SK-N-SH (cell line): ENCODE measurements at regions of chr5 and their contacts with region 1.

Region 1: DNA sequence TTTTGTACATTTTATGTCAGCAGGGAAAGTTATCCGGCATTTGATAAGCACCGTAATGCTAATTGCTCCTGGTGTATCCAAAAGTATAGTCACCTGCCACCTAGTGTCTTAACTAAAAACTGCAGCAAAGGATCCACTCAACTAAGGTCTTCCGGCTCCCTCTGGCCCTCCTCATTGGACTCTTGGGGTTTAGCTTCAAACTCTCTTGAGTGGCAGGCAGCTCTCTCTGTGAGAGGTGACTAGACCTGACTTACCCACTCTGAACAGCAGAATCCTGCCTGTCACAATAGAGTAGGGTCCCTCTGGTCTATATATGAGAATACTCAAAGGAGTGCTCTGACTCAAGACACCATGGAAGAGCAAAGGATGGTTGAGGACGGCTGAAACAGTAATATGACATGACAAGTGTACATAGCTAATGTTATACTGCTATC is 60.3 kb upstream of the CAST start:
- DNase-seq: peak; percentile 67
- H3K4me3 ChIP-seq: no peak overlapping the region
- H3K27ac ChIP-seq: no peak overlapping the region
- H3K4me1 ChIP-seq: peaks cover 0 to 4% of the 10 kb centered on the region in 2 experiments; a peak in 1 of 4 replicates
- H3K27me3 ChIP-seq: no peaks in the 10 kb centered on the region
- CTCF ChIP-seq: peak; percentile 81
- EP300 ChIP-seq: no peak
- RAD21 ChIP-seq: peak; percentile 79

Region 2: GRCh38 chr5:96336351-96336985 is 265.4 kb before region 1 on chr5:
- CTCF ChIA-PET with region 1: interaction called, 40 read pairs
- POLR2A ChIA-PET with region 1: no interaction called
- DNase-seq: peak; percentile 36
- H3K4me3 ChIP-seq: no peak overlapping the region
- H3K27ac ChIP-seq: peak overlapping the region; percentile 19 to 49; a peak in 3 of 4 replicates
- H3K4me1 ChIP-seq: peaks cover 0 to 18% of the 10 kb centered on the region in 2 experiments; a peak in 2 of 4 replicates
- H3K27me3 ChIP-seq: no peaks in the 10 kb centered on the region
- CTCF ChIP-seq: peak; percentile 94
- EP300 ChIP-seq: no peak
- RAD21 ChIP-seq: peak; percentile 95

Region 3: GRCh38 chr5:96350678-96351077 is 251.2 kb before region 1 on chr5:
- CTCF ChIA-PET with region 1: interaction called, 112 read pairs
- POLR2A ChIA-PET with region 1: no interaction called
- DNase-seq: no peak
- H3K4me3 ChIP-seq: no peak overlapping the region
- H3K27ac ChIP-seq: no peak overlapping the region
- H3K4me1 ChIP-seq: peaks cover 0 to 7% of the 10 kb centered on the region in 2 experiments; a peak in 1 of 4 replicates
- H3K27me3 ChIP-seq: no peaks in the 10 kb centered on the region
- CTCF ChIP-seq: no peak
- EP300 ChIP-seq: no peak
- RAD21 ChIP-seq: no peak

Region 4: GRCh38 chr5:96614110-96614691 is 12.4 kb after region 1 on chr5:
- CTCF ChIA-PET with region 1: interaction called, 26 read pairs
- POLR2A ChIA-PET with region 1: no interaction called
- DNase-seq: peak; percentile 64
- H3K4me3 ChIP-seq: peak overlapping the region; percentile 10 to 58; a peak in 2 of 4 replicates
- H3K27ac ChIP-seq: peak overlapping the region; percentile 17 to 89; a peak in 3 of 4 replicates
- H3K4me1 ChIP-seq: peaks cover 0 to 16% of the 10 kb centered on the region in 2 experiments; a peak in 1 of 4 replicates
- H3K27me3 ChIP-seq: no peaks in the 10 kb centered on the region
- CTCF ChIP-seq: peak; percentile 71
- EP300 ChIP-seq: peak in 1 of 2 experiments; percentile 47; a peak in 1 of 4 replicates
- RAD21 ChIP-seq: peak; percentile 91